ENCODE measurements at regions of chr10 and their contacts with region 1.

Region 1: DNA sequence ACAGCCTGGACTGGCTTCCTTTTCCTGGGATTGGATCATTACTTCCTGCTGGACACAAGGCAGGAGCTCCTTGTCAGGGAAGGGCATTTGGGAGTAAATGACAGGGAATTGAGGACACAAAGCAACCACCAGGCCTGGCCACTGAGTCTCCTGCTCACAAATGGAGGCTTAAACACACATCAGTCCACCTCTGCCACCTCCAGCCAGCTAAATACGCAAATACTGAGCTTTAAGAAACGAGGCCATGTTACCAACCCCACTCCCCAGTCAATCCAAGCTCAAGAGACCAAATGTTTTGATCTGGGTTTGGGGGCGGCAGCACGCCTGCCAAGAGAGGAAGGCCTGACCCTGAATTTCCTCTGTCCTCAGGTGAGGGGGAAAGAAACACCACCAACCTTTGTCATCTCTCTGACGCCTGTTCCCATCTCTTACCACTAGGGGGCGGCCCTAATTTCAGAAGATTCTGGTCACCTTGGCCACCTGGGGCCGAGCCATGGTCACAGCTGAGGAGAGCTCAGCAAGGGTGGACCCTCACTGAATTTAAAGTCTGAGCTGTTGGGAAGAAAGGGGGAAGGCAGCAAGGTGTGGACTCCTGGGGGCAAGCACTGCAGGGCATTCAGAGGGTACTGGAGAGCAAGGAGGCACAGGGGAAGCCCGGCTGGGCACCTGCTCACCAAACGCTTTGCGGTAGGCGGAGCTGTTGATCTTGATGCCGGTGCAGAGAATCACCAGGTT is 16.5 kb downstream of the AIFM2 start:
- DNase-seq: peak; percentile 22 to 81 (median 52)
- ATAC-seq: peak; percentile 80 to 92
- H3K4me3 Mint-ChIP-seq: peak overlapping the region in 1 of 10 donors; percentile 3
- H3K27ac Mint-ChIP-seq: peak overlapping the region in 6 of 10 donors; percentile 4 to 88 (median 68)
- H3K4me1 Mint-ChIP-seq: peaks cover 3 to 13% (median 6%) of the 10 kb centered on the region in 4 donors
- H3K27me3 Mint-ChIP-seq: no peaks in the 10 kb centered on the region

Region 2: GRCh38 chr10:69392481-69393000 is 723.6 kb before region 1 on chr10:
- POLR2A ChIA-PET with region 1: no interaction called
- DNase-seq: peak; percentile 64 to 90 (median 80)
- ATAC-seq: peak; percentile 97 to 99
- H3K4me3 Mint-ChIP-seq: no peak overlapping the region
- H3K27ac Mint-ChIP-seq: peak overlapping the region; percentile 28 to 93 (median 74)
- H3K4me1 Mint-ChIP-seq: peaks cover 11 to 22% (median 19%) of the 10 kb centered on the region in 4 donors
- H3K27me3 Mint-ChIP-seq: no peaks in the 10 kb centered on the region

Region 3: GRCh38 chr10:70093335-70093944 is 22.7 kb before region 1 on chr10:
- POLR2A ChIA-PET with region 1: interaction called, 25 read pairs
- DNase-seq: peak in 4 of 10 donors; percentile 19 to 64 (median 48)
- ATAC-seq: peak; percentile 69 to 70
- H3K4me3 Mint-ChIP-seq: peak overlapping the region; percentile 78 to 97 (median 94)
- H3K27ac Mint-ChIP-seq: peak overlapping the region; percentile 95 to 99 (median 98)
- H3K4me1 Mint-ChIP-seq: peaks cover 20 to 69% (median 58%) of the 10 kb centered on the region in 4 donors
- H3K27me3 Mint-ChIP-seq: no peaks in the 10 kb centered on the region

Region 4: GRCh38 chr10:70162892-70163201 is 46.7 kb after region 1 on chr10:
- POLR2A ChIA-PET with region 1: no interaction called
- DNase-seq: peak in 4 of 10 donors; percentile 27 to 53 (median 47)
- ATAC-seq: peak; percentile 78 to 81
- H3K4me3 Mint-ChIP-seq: peak overlapping the region; percentile 40 to 83 (median 74)
- H3K27ac Mint-ChIP-seq: peak overlapping the region; percentile 3 to 87 (median 68)
- H3K4me1 Mint-ChIP-seq: peaks cover 24 to 74% (median 68%) of the 10 kb centered on the region in 4 donors
- H3K27me3 Mint-ChIP-seq: no peaks in the 10 kb centered on the region